ENCODE measurements at regions of chr13 and their contacts with region 1.

Region 1: DNA sequence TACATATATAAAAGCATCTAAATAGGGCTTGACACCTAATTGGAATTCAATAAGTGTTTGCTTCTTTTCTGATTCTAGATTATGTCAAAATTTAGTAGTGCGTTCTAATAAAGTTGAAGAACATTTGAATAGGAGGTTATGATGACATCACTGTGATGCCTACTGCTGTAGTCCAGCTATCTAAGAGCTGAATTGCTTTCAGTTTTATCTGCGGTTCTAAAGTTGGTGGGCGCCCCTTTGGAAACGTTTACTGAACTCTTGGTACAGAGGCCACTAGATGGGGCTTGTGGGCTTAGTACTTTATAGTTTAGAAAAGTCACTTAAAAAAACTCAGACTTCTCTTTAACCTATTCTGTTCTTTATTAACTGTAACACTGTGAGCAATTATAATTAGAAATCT is 776.9 kb downstream of the GPC5 start:
- DNase-seq: peak in 1 of 9 experiments; percentile 1
- ATAC-seq: no peak
- H3K4me3 ChIP-seq: no peak overlapping the region
- H3K4me3 Mint-ChIP-seq: no peak overlapping the region
- H3K27ac ChIP-seq: no peak overlapping the region
- H3K27ac Mint-ChIP-seq: no peak overlapping the region
- H3K4me1 ChIP-seq: no peaks in the 10 kb centered on the region
- H3K4me1 Mint-ChIP-seq: no peaks in the 10 kb centered on the region
- H3K27me3 ChIP-seq: no peaks in the 10 kb centered on the region
- H3K27me3 Mint-ChIP-seq: no peaks in the 10 kb centered on the region
- CTCF ChIP-seq: no peak

Region 2: DNA sequence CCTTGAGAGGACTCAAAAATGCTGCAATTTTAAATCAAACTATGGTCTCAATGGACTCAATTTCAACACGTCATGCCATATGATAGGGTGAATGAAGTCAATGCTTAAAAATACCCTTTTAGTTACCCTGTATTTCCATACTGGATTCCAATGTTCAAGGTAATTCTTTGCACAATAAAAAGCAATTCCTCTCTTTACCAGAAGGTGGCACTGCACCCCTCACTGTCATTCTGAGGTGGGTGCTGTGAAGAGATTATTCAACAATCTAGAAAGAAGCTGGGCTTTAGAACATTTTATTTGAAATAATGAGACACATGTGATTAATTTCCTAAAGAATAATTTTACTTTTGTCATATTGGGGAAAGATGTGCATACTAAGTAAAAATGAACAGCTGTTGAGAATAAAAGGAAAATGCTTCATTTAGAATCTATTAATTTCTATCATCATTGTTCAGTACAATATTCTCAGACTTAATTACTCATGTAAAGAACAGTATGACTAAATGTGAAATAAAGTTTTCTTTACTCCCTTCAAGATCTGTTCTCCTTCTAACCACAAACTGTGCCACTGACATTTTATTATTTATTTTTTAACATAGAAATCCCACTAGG is 12.2 kb after region 1 on chr13:
- CTCF ChIA-PET with region 1: interaction called, 10 read pairs
- POLR2A ChIA-PET with region 1: no interaction called
- intact Hi-C with region 1: no loop called
- DNase-seq: peak in 2 of 9 experiments; percentile 23 to 41
- ATAC-seq: no peak
- H3K4me3 ChIP-seq: no peak overlapping the region
- H3K4me3 Mint-ChIP-seq: no peak overlapping the region
- H3K27ac ChIP-seq: no peak overlapping the region
- H3K27ac Mint-ChIP-seq: no peak overlapping the region
- H3K4me1 ChIP-seq: no peaks in the 10 kb centered on the region
- H3K4me1 Mint-ChIP-seq: no peaks in the 10 kb centered on the region
- H3K27me3 ChIP-seq: no peaks in the 10 kb centered on the region
- H3K27me3 Mint-ChIP-seq: no peaks in the 10 kb centered on the region
- CTCF ChIP-seq: peak; percentile 76

Region 3: DNA sequence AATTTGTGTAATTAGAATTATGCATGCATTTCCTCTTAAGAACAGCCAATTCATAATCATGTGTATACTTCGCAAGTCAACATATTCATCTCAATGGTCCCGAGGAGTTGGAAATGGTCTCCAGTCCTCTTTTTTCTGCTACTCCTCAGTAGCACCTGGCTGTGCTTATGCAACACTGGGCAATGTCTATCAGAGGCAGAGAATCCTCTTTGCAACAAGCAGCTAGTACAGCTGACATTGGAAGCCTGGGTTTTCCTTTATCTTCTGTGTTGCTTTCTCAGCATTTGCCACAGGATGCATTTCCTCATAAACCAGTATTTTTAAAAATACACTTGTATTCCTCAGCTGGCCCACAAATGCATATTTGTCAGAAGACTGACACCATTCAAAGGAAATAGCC is 646.0 kb after region 1 on chr13:
- CTCF ChIA-PET with region 1: no interaction called
- POLR2A ChIA-PET with region 1: no interaction called
- intact Hi-C with region 1: no loop called
- DNase-seq: no peak
- ATAC-seq: no peak
- H3K4me3 ChIP-seq: no peak overlapping the region
- H3K4me3 Mint-ChIP-seq: no peak overlapping the region
- H3K27ac ChIP-seq: no peak overlapping the region
- H3K27ac Mint-ChIP-seq: no peak overlapping the region
- H3K4me1 ChIP-seq: no peaks in the 10 kb centered on the region
- H3K4me1 Mint-ChIP-seq: no peaks in the 10 kb centered on the region
- H3K27me3 ChIP-seq: no peaks in the 10 kb centered on the region
- H3K27me3 Mint-ChIP-seq: no peaks in the 10 kb centered on the region
- CTCF ChIP-seq: no peak